Activated CD4-positive, alpha-beta T cell treated with anti-CD3 and anti-CD28 coated beads, Interleukin-2, amount 10 ng/mL, durations not matched to agents 24 days and 14 days (primary cell): ENCODE measurements at regions of chr15 and their contacts with region 1.

Region 1: GRCh38 chr15:48925714-48926223 is 38.0 kb downstream of the SHC4 start:
- DNase-seq: peak; percentile 70
- H3K4me3 Mint-ChIP-seq: peak overlapping the region; percentile 46
- H3K27ac Mint-ChIP-seq: peak overlapping the region; percentile 97
- H3K4me1 Mint-ChIP-seq: peaks cover 61% of the 10 kb centered on the region
- H3K27me3 Mint-ChIP-seq: peaks cover 2% of the 10 kb centered on the region

Region 2: DNA sequence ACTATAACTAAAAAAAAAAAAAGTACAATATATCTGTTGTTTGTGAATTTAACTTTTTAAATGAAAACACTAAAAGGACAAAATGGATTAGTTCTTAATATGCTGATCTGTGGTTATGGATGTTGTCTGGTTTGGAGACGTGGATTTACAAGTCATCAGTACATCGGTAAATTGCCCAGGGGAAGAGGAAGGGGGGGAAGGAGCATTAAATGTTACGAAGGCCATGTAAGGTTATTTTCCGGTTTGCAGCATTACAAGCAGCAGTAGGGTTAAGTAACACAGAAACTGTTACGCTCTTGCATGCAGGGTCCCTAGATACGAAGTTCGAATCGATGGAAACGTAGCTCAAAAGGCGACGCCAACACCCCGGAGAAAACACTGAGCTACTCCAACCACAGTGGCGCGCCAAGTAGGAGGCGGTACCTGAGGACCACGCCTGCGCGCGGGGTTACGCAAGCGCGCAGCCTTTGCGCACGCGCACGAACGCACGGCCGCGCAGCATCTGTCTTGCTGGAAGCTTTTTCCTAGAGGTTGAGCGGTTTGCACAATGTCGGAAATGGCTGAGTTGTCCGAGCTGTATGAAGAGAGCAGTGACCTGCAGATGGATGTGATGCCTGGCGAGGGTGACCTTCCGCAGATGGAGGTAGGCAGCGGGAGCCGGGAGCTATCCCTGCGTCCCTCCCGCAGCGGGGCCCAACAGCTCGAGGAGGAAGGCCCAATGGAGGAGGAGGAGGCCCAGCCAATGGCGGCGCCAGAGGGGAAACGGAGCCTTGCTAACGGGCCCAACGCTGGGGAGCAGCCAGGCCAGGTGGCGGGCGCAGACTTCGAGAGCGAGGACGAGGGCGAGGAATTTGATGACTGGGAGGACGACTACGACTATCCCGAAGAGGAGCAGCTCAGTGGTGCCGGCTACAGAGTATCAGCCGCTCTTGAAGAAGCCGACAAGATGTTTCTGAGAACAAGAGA is 47.9 kb before region 1 on chr15 and contains the start of gene EID1:
- intact Hi-C with region 1: loop called (anchors 1 kb)
- DNase-seq: peak; percentile 99
- H3K4me3 Mint-ChIP-seq: peak within 1 kb of the TSS; percentile 97
- H3K27ac Mint-ChIP-seq: peak within 1 kb of the TSS; percentile 99
- H3K4me1 Mint-ChIP-seq: peaks cover 46% of the 10 kb centered on the region
- H3K27me3 Mint-ChIP-seq: peaks cover 4% of the 10 kb centered on the region
- total RNA-seq, gene EID1: 192 and 209 TPM in 2 replicates

Region 3: DNA sequence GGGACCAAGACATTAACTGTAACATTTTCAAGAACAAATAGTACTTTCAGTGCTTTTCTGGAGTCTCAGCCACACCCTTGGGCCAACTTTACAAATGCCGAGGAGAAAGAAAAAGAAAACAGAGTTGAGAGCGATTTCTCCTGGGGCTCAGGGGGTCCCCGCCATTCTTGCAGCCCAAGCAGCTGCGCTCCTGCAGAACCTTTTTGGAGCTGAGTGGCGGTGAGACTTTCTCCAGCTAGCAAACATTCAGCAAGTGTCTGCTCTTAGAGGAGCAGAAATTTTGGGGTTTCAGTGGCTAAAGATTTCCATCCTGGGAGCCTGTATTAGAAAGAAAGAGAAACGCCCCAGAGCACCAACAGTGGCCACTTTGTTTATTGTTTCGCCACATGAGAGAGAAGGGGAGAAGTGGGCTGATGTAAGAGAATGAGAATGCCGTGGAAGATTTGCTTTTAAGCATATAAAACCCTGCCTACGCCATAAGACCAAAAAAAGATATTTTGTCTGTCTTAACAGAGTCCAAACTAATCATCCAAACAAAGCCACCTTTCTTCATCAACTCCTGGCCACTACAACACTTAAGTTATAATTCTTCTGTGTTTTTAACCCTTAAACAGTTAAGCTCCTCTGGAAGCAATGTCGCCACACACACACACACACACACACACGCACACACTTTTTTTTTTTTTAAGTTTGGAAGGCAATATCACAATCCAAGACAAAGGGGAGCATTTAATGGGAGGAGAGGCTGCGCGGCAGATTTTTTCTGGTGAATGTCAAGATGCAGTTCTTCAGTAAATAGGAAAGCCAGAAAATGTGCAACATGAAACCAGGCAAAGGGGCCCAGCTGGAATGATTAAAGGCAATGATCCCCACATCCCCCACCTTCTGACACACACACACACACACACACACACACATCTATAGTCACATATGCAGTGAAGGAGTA is 28.6 kb before region 1 on chr15:
- intact Hi-C with region 1: loop called (anchors 1 kb)
- DNase-seq: no peak
- H3K4me3 Mint-ChIP-seq: peak overlapping the region; percentile 33
- H3K27ac Mint-ChIP-seq: peak overlapping the region; percentile 76
- H3K4me1 Mint-ChIP-seq: peaks cover 22% of the 10 kb centered on the region
- H3K27me3 Mint-ChIP-seq: peaks cover 4% of the 10 kb centered on the region

Region 4: GRCh38 chr15:48914717-48915116 is 11.1 kb before region 1 on chr15:
- intact Hi-C with region 1: loop called (anchors 1 kb)
- DNase-seq: no peak
- H3K4me3 Mint-ChIP-seq: no peak overlapping the region
- H3K27ac Mint-ChIP-seq: no peak overlapping the region
- H3K4me1 Mint-ChIP-seq: peaks cover 18% of the 10 kb centered on the region
- H3K27me3 Mint-ChIP-seq: no peaks in the 10 kb centered on the region

Region 5: GRCh38 chr15:48946088-48946839 is 20.5 kb after region 1 on chr15:
- intact Hi-C with region 1: loop called (anchors 1 kb)
- DNase-seq: no peak
- H3K4me3 Mint-ChIP-seq: no peak overlapping the region
- H3K27ac Mint-ChIP-seq: peak overlapping the region; percentile 82
- H3K4me1 Mint-ChIP-seq: peaks cover 20% of the 10 kb centered on the region
- H3K27me3 Mint-ChIP-seq: no peaks in the 10 kb centered on the region